MCF 10A (cell line): ENCODE measurements at regions of chr18 and their contacts with region 1.

Region 1: GRCh38 chr18:48445540-48445939 is 36.4 kb upstream of the ZBTB7C start:
- DNase-seq: peak; percentile 90
- H3K4me3 Mint-ChIP-seq: no peak overlapping the region
- H3K27ac Mint-ChIP-seq: no peak overlapping the region
- H3K4me1 Mint-ChIP-seq: peaks cover 6% of the 10 kb centered on the region
- H3K27me3 Mint-ChIP-seq: peaks cover 16% of the 10 kb centered on the region
- CTCF ChIP-seq: peak; percentile 94

Region 2: DNA sequence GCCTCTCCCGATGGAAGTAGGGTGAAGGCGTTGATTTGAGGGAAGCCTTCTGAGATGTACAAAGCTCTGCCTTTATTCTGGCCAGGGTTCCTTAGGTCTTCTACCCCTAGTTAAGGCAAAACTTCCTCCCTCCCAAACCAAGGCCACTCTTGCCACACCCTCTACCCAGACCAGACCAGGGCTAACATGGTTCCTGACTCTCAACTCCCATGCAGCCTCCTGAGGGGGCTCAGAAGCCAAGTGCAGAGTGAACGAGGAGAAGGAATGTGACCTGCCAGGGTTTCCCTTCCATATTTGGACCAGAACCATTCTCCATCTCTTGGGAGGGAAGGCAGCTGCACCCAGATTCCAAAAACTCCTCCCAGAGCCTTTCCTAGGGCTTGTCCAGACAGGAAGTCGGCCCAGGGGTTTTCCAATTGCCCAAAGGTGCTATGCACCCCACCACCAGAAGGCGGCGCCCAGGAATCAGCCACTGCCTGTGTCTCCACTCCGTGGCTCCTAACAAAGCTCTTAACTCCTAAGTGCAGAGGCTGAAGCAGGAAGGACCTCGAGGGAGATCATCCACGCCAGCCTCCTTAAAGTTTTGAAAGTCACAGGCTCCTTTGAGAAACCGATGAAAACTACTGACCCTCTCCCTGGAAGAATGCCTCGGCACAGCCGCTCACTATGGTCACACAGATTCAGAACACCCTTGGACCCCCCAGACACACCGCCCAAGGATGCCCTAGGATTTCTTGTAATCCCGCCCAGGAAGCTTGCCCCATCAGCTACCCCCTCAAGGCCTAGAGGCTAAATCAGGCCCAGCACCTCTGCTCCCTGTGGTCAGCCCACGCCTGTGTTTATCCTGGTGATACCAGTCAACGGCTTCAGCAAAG is 672.9 kb before region 1 on chr18:
- CTCF ChIA-PET with region 1: no interaction called
- POLR2A ChIA-PET with region 1: no interaction called
- intact Hi-C with region 1: loop called (anchors 5 kb)
- DNase-seq: peak; percentile 83
- H3K4me3 Mint-ChIP-seq: no peak overlapping the region
- H3K27ac Mint-ChIP-seq: no peak overlapping the region
- H3K4me1 Mint-ChIP-seq: no peaks in the 10 kb centered on the region
- H3K27me3 Mint-ChIP-seq: peaks cover 40% of the 10 kb centered on the region
- CTCF ChIP-seq: peak; percentile 93

Region 3: GRCh38 chr18:48030616-48031480 is 414.7 kb before region 1 on chr18:
- CTCF ChIA-PET with region 1: interaction called, 264 read pairs
- POLR2A ChIA-PET with region 1: interaction called, 3 read pairs
- intact Hi-C with region 1: loop called (anchors 1 kb)
- DNase-seq: peak; percentile 80
- H3K4me3 Mint-ChIP-seq: no peak overlapping the region
- H3K27ac Mint-ChIP-seq: no peak overlapping the region
- H3K4me1 Mint-ChIP-seq: peaks cover 25% of the 10 kb centered on the region
- H3K27me3 Mint-ChIP-seq: no peaks in the 10 kb centered on the region
- CTCF ChIP-seq: peak; percentile 76

Region 4: DNA sequence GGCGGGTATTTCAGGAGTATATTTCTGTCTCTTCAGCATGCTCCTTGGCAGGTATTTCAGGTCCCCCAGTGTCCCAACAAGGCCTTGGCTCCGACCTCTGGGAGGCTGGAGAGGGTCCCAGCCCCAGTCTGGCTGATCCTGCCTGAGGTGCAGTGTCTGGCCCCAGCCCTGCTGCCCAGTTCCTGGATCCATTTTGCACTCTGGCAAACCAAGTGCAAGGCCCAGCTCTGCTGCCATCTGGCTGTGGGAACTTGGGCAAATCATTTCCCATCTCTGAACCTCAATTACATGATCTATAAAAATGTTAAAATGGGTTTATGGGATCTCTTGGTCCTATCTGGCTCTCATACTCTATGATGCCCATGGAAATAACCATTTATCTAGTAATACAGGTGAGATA is 99.9 kb before region 1 on chr18:
- CTCF ChIA-PET with region 1: interaction called, 10 read pairs
- POLR2A ChIA-PET with region 1: no interaction called
- intact Hi-C with region 1: loop called (anchors 2 kb)
- DNase-seq: peak; percentile 55
- H3K4me3 Mint-ChIP-seq: no peak overlapping the region
- H3K27ac Mint-ChIP-seq: no peak overlapping the region
- H3K4me1 Mint-ChIP-seq: peaks cover 10% of the 10 kb centered on the region
- H3K27me3 Mint-ChIP-seq: no peaks in the 10 kb centered on the region
- CTCF ChIP-seq: peak; percentile 55

Region 5: DNA sequence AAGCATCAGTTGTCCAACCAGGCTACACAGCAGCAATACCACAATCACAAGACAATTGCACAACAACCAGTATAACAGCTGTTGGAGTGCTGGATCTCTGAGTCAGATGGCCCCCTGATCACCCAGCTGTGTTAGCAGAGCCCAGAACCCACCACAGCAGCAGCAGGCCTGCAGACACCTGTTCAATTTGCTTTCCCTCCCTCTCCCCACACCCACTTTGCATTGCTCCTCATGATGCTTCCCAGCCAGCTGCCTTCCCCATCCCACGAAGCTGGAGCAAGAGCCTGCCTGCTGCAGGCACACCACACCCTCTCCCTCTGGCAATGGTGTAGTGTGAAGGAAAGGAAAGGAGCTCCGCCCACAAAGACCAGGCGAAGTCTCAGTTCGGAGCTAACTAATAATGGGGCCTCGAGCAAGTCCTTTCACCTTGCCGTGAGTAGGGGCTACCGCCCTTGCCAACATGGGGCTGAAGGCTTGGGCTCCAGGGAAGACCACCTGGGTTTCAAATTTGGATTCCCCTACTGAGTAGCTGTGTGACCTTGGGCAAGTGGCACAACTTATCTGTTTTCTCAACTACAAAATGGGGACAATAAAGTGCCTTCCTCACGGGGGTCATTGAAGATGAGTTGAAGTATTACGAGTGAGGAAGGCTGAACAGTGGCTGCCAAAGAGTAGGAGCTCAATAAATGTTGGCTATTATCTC is 16.9 kb before region 1 on chr18:
- CTCF ChIA-PET with region 1: interaction called, 21 read pairs
- POLR2A ChIA-PET with region 1: no interaction called
- intact Hi-C with region 1: no loop called
- DNase-seq: no peak
- H3K4me3 Mint-ChIP-seq: no peak overlapping the region
- H3K27ac Mint-ChIP-seq: no peak overlapping the region
- H3K4me1 Mint-ChIP-seq: no peaks in the 10 kb centered on the region
- H3K27me3 Mint-ChIP-seq: peaks cover 55% of the 10 kb centered on the region
- CTCF ChIP-seq: no peak

Region 6: DNA sequence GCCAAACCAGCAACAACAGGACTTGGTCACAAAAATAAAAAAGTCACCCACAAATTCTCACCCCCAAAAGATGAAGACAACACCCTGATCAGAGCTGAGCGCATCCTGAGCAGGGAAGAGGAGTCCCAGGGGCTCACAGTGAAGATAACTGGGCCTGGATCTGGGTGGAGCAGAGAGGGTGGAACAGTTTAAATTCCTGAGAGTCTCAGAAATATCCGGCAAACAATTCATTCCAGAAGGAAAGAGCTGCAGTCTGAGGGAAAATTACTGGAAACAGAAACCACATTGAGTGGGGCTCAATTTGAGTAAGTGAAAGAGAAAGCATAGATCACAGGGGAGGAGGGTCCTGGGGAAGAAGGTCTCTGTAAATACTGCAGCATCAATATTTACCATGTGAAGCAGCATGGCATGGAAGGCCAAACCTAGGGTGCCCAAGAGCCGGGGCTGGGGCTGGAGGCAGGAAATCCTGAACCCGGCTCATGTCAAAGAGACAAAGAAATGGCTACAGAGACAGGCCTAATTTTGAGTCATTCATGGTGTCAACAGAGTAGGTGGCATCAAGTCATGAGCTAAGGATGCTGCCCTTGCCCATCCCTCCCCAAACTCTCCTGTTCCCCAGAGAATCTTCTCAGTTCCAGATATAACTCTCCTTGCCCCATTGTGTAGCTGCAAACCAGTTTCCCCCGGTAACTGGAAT is 25.1 kb after region 1 on chr18:
- CTCF ChIA-PET with region 1: interaction called, 8 read pairs
- POLR2A ChIA-PET with region 1: no interaction called
- intact Hi-C with region 1: loop called (anchors 1 kb)
- DNase-seq: no peak
- H3K4me3 Mint-ChIP-seq: no peak overlapping the region
- H3K27ac Mint-ChIP-seq: no peak overlapping the region
- H3K4me1 Mint-ChIP-seq: peaks cover 5% of the 10 kb centered on the region
- H3K27me3 Mint-ChIP-seq: peaks cover 16% of the 10 kb centered on the region
- CTCF ChIP-seq: no peak